Pancreas (tissue), 10 donors: ENCODE measurements at regions of chr3 and their contacts with region 1.

Region 1: DNA sequence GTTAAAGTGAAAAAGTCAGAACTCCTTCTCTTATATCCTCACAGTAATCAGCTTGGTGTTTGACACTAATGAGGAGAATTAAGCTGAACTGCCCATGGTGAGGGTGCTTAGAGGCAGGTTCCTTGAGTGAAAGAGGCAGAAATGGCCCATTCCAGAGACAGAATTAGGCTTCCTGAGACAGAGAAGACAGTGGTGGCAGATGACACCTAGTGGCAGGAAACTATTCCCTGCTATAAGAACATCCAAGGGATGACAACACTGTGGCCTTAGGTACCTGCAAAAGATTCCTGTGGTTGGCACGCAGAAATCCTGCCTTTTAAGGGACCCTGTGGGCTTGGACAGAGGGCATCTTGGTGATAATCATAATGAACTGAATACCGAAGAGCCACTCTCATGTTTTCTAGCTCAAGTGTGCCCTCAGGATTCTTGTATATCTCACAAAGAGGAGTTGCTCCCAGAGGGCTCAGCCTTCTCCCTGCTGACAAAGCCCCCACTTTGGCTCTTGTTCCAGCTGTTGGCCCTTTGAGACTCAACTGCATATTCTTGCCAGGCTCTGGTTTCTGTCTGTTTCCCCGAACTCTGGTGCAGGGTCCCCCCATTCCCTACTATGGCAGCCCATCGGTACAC is 56.0 kb downstream of the KBTBD12 start:
- DNase-seq: peak in 1 of 6 donors; percentile 21
- ATAC-seq: peak in 3 of 4 donors; percentile 53 to 78 (median 67)
- H3K4me3 ChIP-seq: no peak overlapping the region
- H3K27ac ChIP-seq: no peak overlapping the region
- H3K4me1 ChIP-seq: no peaks in the 10 kb centered on the region
- H3K27me3 ChIP-seq: no peaks in the 10 kb centered on the region
- CTCF ChIP-seq: peak in 2 of 4 donors; percentile 33 to 38

Region 2: DNA sequence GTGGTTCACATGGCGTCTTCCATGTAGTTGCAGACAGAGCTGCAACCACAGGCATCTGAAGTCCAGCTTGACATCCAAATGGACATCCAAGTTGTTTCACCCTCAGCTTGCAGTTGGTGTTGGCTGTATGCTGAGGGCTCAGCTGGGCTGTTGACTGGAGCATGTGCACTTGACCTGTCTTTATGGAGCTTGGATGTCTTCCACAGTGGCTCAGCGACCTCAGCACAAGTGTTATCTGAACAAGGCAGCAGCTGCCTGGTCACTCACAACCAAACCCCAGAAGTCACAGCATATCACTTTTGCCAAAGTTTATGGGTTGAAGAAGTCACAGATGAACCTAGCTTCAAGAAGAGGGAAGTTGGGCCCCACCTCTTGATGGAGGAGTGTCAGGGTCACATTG is 473.4 kb before region 1 on chr3:
- intact Hi-C with region 1: no loop called
- DNase-seq: no peak
- ATAC-seq: no peak
- H3K4me3 ChIP-seq: no peak overlapping the region
- H3K27ac ChIP-seq: no peak overlapping the region
- H3K4me1 ChIP-seq: no peaks in the 10 kb centered on the region
- H3K27me3 ChIP-seq: no peaks in the 10 kb centered on the region
- CTCF ChIP-seq: no peak

Region 3: DNA sequence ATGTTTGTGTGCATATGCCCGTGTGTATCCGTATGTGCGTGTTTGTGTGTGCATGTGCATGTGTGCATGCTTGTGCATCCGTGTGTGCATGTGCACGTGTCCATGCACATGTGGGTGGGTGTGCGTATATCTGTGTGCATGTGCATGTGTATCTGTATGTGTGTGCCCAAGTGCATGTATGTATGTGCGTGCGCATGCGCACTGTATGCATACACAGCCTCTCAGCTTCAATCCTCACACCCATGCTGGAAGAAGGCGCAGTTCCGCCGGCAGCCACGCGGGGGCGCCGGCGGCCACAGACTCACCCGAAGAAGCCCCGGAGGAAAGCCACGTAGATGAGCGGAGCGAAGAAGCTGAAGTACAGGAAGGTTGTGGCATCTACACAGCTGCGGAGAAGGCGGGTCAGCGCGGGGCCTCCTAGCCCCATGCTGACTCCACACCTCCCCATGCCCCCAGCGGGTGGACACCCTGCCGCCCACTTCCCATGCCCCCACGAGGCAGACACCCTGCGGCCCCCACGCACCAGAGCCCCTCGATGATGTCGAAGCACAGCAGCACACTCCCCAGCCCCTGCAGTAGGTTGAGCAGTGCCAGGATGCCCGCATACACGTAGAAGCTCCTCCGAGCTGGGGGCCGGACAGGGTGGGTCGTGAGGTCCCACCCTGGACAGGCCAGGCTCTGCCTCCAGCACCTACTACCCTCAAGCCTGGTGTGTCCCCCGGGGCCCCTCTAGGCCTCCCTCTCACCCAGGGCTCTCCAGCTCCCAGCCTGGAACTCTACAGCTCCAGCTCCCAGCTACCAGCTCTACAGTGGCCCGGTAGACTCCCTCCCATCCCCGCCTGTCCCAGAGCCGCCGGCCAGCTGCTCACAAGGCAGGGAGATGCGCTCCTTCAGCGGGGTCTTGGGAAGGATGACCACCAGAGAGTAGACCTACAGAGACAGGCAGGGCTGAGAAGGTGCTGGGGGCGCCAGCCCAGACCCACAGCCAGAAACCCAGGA is 395.9 kb before region 1 on chr3:
- intact Hi-C with region 1: loop called in 1 of 3 experiments (anchors 10 kb)
- DNase-seq: peak; percentile 72 to 92 (median 87)
- ATAC-seq: peak; percentile 92 to 97 (median 96)
- H3K4me3 ChIP-seq: no peak overlapping the region
- H3K27ac ChIP-seq: no peak overlapping the region
- H3K4me1 ChIP-seq: no peaks in the 10 kb centered on the region
- H3K27me3 ChIP-seq: no peaks in the 10 kb centered on the region
- CTCF ChIP-seq: peak; percentile 93 to 98 (median 96)

Region 4: GRCh38 chr3:127652231-127652995 is 318.7 kb before region 1 on chr3:
- intact Hi-C with region 1: loop called in 2 of 3 experiments (anchors 5 to 10 kb)
- DNase-seq: peak in 1 of 6 donors; percentile 52
- ATAC-seq: peak; percentile 67 to 90 (median 86)
- H3K4me3 ChIP-seq: no peak overlapping the region
- H3K27ac ChIP-seq: no peak overlapping the region
- H3K4me1 ChIP-seq: no peaks in the 10 kb centered on the region
- H3K27me3 ChIP-seq: no peaks in the 10 kb centered on the region
- CTCF ChIP-seq: peak; percentile 62 to 87 (median 80)